Adrenal gland (tissue), 19 donors: ENCODE measurements at regions of chr20 and their contacts with region 1.

Region 1: DNA sequence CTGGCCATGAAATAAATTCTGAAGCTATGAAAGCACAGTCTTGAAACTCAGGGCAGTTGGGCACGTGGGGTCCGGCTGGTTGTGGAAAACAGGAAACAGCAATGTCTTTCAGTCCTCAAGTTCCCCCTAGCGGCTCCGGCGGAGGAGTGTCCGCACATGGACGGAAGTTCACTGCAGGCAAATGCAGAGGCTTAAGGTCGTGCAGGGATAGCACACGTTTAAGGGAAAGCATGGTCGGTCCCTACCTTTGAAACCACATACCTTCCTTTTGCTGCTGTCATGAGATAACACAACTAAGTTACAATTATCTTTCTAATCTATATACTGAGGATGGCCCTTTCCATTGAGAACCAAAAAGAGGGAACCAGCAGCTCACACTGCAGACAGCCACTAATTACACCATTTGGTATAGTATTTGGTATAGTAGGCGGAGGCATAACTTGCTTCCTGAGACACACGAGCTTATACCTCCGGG is 52.6 kb upstream of the NFATC2 start:
- DNase-seq: peak; percentile 80 to 95 (median 88)
- H3K4me3 ChIP-seq: no peak overlapping the region
- H3K27ac ChIP-seq: no peak overlapping the region
- H3K4me1 ChIP-seq: no peaks in the 10 kb centered on the region
- H3K27me3 ChIP-seq: no peaks in the 10 kb centered on the region
- CTCF ChIP-seq: peak; percentile 65 to 92 (median 90)
- POLR2A ChIP-seq: no peak

Region 2: GRCh38 chr20:50992733-50993457 is 602.2 kb before region 1 on chr20:
- intact Hi-C with region 1: loop called (anchors 10 kb)
- DNase-seq: peak in 2 of 7 donors; percentile 22 to 33
- H3K4me3 ChIP-seq: no peak overlapping the region
- H3K27ac ChIP-seq: no peak overlapping the region
- H3K4me1 ChIP-seq: no peaks in the 10 kb centered on the region
- H3K27me3 ChIP-seq: peaks cover 11% of the 10 kb centered on the region
- CTCF ChIP-seq: peak in 4 of 6 experiments; percentile 31 to 49 (median 37)
- POLR2A ChIP-seq: no peak

Region 3: DNA sequence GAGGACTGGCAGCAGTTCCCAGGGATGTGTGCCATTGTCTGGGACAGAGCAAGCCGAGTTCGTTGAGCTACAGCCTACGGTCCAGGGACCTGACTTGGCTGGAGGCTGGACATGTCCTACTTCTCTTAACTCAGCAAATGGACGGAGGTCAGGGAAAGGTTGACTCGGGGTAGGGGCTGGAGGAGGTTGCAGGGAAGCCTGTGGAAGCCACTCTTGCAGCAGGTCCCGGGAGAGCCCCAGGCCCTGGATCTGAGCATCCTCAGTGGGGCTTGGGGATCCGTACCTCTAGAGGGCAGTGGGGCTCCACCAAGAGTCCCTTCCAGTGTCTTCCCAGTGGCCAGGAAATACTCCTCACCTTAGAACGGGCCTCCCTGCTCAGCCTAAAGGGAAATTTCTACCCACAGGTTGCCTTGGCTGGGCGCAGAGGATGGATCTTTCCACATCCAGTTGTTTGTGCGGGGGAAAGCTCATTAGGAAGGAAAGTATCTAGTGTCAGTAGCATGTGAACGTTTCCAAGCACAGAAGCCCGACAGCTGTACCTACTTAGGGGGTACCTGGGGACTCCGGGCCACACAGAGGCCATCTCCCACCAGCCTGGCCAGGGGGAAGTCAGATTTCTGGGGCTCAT is 222.8 kb before region 1 on chr20:
- intact Hi-C with region 1: loop called (anchors 5 kb)
- DNase-seq: peak; percentile 46 to 82 (median 68)
- H3K4me3 ChIP-seq: no peak overlapping the region
- H3K27ac ChIP-seq: no peak overlapping the region
- H3K4me1 ChIP-seq: no peaks in the 10 kb centered on the region
- H3K27me3 ChIP-seq: no peaks in the 10 kb centered on the region
- CTCF ChIP-seq: peak; percentile 45 to 84 (median 72)
- POLR2A ChIP-seq: peak in 1 of 2 donors; percentile 12

Region 4: DNA sequence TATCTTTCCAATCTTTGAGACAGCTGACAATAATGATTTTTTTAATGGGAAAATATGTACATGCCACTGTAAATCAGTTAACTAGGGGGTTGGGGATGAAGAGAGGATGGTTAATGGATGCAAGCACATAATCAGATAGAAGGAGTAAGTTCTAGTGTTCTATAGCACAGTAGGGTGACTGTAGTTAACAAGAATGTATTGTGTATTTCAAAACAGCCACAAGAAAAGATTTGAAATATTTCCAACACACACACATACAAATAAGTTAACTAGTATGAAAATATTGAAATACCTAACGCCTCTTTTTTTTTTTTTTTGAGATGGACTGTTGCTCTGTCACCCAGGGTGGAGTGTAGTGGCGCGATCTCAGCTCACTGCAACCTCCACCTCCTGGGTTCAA is 360.7 kb after region 1 on chr20:
- intact Hi-C with region 1: no loop called
- DNase-seq: no peak
- H3K4me3 ChIP-seq: no peak overlapping the region
- H3K27ac ChIP-seq: no peak overlapping the region
- H3K4me1 ChIP-seq: no peaks in the 10 kb centered on the region
- H3K27me3 ChIP-seq: no peaks in the 10 kb centered on the region
- CTCF ChIP-seq: no peak
- POLR2A ChIP-seq: no peak